HepG2 (cell line): ENCODE measurements at regions of chr14 and their contacts with region 1.

Region 1: GRCh38 chr14:23605931-23606585 is 27.5 kb upstream of the JPH4 start:
- DNase-seq: no peak
- ATAC-seq: no peak
- H3K4me3 ChIP-seq: no peak overlapping the region
- H3K27ac ChIP-seq: no peak overlapping the region
- H3K4me1 ChIP-seq: peaks cover 88% of the 10 kb centered on the region
- H3K27me3 ChIP-seq: no peaks in the 10 kb centered on the region
- CTCF ChIP-seq: no peak
- EP300 ChIP-seq: no peak
- POLR2A ChIP-seq: 0 out of 4 replicates have a peak, but pooled peaks of 1 of the 2 experiments have one; percentile 7
- RAD21 ChIP-seq: no peak

Region 2: DNA sequence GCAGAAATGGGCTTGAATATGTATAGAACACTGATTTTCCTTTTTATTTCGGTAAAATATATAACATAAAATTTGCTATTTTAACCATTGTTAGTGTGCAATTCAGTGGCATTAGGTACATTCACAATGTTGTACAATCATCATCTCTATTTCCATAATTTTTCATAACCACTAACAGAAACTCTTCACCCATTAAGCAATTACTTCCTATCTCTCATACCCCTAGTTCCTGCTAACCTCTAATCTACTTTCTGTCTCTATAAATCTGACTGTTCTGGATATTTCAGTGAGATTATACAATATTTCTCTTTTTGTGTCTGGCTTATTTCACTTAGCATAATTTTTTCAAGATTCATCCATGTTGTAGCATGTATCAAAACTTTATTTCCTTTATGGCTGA is 377.2 kb before region 1 on chr14:
- CTCF ChIA-PET with region 1: no interaction called
- POLR2A ChIA-PET with region 1: no interaction called
- in situ Hi-C with region 1: no loop called
- intact Hi-C with region 1: no loop called
- DNase-seq: no peak
- ATAC-seq: no peak
- H3K4me3 ChIP-seq: no peak overlapping the region
- H3K27ac ChIP-seq: no peak overlapping the region
- H3K4me1 ChIP-seq: no peaks in the 10 kb centered on the region
- H3K27me3 ChIP-seq: 0 out of 5 replicates have a peak, but pooled peaks cover 0 to 2% of the 10 kb centered on the region in 2 experiments
- CTCF ChIP-seq: no peak
- EP300 ChIP-seq: no peak
- POLR2A ChIP-seq: no peak
- RAD21 ChIP-seq: no peak

Region 3: GRCh38 chr14:23577004-23577681 is 28.9 kb before region 1 on chr14:
- CTCF ChIA-PET with region 1: no interaction called
- POLR2A ChIA-PET with region 1: interaction called, 114 read pairs
- in situ Hi-C with region 1: no loop called
- intact Hi-C with region 1: no loop called
- DNase-seq: no peak
- ATAC-seq: no peak
- H3K4me3 ChIP-seq: no peak overlapping the region; a peak in 1 of 6 replicates
- H3K27ac ChIP-seq: no peak overlapping the region
- H3K4me1 ChIP-seq: peaks cover 45% of the 10 kb centered on the region
- H3K27me3 ChIP-seq: peaks cover 0 to 2% of the 10 kb centered on the region in 2 experiments; a peak in 2 of 5 replicates
- CTCF ChIP-seq: no peak
- EP300 ChIP-seq: no peak
- POLR2A ChIP-seq: no peak
- RAD21 ChIP-seq: no peak

Region 4: DNA sequence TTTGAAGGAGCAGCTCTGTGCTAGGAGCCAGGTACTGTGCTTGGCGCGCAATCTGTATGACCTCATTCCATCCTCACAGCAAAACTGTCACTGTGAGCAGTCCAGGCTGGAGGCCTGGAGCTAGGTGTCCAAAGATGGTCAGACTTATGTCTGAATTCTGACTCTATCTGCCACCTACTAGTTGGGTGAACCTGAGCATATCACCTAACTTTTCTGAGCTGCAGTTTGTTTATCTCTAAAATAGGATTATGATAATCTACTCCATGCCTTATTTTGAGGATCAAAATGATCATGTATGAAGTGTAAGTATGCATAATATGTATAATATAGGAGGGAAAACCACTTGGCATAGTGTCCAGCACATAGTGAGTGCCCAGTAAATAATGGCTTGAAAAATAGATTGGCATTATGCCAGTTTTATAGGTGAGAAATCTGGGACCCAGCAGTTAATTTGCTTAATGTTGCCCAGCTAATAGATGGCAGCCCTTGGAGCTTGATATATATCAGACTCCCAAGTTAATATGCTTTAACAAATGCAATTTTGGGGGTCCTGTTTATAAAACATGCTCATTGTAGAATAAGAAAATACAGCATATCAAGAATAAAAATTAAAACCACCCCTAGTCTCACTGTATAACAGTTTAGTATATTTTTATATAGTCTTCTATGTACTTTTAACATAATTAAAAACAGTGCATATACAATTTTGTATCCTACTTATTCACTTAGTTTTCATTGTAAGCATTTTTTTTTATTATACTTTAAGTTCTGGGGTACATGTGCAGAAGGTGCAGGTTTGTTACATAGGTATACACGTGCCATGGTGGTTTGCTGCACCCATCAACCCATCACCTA is 22.9 kb before region 1 on chr14:
- CTCF ChIA-PET with region 1: no interaction called
- POLR2A ChIA-PET with region 1: interaction called, 142 read pairs
- in situ Hi-C with region 1: no loop called
- intact Hi-C with region 1: no loop called
- DNase-seq: peak; percentile 80
- ATAC-seq: peak; percentile 60
- H3K4me3 ChIP-seq: peak overlapping the region in 2 of 3 experiments; percentile 23 to 42; a peak in 4 of 6 replicates
- H3K27ac ChIP-seq: peak overlapping the region; percentile 78
- H3K4me1 ChIP-seq: peaks cover 39% of the 10 kb centered on the region
- H3K27me3 ChIP-seq: no peaks in the 10 kb centered on the region
- CTCF ChIP-seq: no peak
- EP300 ChIP-seq: no peak
- POLR2A ChIP-seq: peak in 1 of 2 experiments; percentile 95; a peak in 2 of 4 replicates
- RAD21 ChIP-seq: no peak; the same call in none of the 2 replicates

Region 5: DNA sequence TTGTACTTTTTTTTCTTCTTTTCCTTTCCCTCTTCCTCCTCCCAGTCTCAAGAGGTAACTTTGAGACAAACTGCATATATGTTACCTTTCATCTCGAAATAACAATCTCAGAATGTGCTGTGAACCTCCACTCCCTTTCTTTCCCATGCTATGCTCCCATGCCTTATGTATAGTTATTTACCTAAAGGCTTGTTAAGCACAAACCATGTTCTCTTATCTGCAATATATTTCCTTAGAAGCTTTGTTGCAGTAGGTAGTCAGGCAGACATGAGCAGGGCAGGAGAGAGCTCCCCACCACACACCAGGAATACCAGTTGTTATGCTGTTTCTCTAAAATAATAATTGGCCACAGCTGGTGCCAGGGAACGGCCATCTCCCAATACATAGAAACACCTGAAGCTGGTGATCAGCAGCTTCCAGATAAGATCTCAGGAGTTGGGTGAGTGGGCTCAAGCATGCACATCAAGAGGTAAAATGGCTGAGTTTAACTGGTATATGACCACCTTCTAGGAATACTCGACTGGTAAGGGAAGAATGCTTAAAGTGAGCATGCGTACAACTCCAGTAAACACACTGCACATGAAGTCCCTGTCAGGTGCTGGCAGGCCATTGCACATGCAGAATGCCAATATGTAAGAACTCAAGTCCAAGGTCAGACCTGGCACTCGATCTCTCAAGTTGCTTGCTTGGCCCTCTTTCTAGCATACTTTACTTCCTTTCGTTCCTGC is 15.3 kb after region 1 on chr14:
- CTCF ChIA-PET with region 1: no interaction called
- POLR2A ChIA-PET with region 1: interaction called, 70 read pairs
- in situ Hi-C with region 1: no loop called
- intact Hi-C with region 1: no loop called
- DNase-seq: no peak
- ATAC-seq: peak; percentile 41
- H3K4me3 ChIP-seq: no peak overlapping the region
- H3K27ac ChIP-seq: no peak overlapping the region
- H3K4me1 ChIP-seq: peaks cover 44% of the 10 kb centered on the region
- H3K27me3 ChIP-seq: no peaks in the 10 kb centered on the region
- CTCF ChIP-seq: no peak
- EP300 ChIP-seq: no peak
- POLR2A ChIP-seq: no peak
- RAD21 ChIP-seq: no peak